ENCODE measurements at regions of chr1 and their contacts with region 1.

Region 1: GRCh38 chr1:106647323-106647722 is 409.2 kb upstream of the PRMT6 start:
- DNase-seq: no peak
- H3K4me3 Mint-ChIP-seq: no peak overlapping the region
- H3K27ac Mint-ChIP-seq: no peak overlapping the region
- H3K4me1 Mint-ChIP-seq: no peaks in the 10 kb centered on the region
- H3K27me3 Mint-ChIP-seq: no peaks in the 10 kb centered on the region
- CTCF ChIP-seq: no peak

Region 2: DNA sequence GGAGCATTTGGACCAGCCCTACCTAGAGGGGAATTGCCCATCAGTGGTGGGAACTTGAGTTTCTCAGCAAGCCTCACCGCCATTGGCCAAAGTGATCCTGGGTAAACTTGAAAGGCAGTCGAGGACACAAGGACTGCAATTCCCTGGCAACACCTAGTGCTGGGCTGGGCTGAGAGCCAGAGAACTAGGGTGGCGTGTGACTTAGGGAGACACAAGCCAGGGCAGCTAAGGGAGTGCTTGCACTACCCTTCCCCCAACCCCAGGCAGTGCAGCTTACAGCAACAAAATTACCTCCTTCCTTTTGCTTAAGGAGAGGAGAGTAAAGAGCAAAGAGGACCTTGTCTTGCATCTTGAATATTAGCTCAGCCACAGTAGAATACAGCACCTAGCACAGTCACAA is 232.2 kb after region 1 on chr1:
- CTCF ChIA-PET with region 1: no interaction called
- intact Hi-C with region 1: loop called (anchors 10 kb)
- DNase-seq: peak; percentile 25
- H3K4me3 Mint-ChIP-seq: no peak overlapping the region
- H3K27ac Mint-ChIP-seq: no peak overlapping the region
- H3K4me1 Mint-ChIP-seq: no peaks in the 10 kb centered on the region
- H3K27me3 Mint-ChIP-seq: no peaks in the 10 kb centered on the region
- CTCF ChIP-seq: no peak